ENCODE measurements at regions of chr1 and their contacts with region 1.

Region 1: GRCh38 chr1:111222308-111223125 is 5.0 kb upstream of the CHI3L2 start:
- DNase-seq: peak; percentile 83
- H3K4me3 Mint-ChIP-seq: no peak overlapping the region
- H3K27ac Mint-ChIP-seq: no peak overlapping the region
- H3K4me1 Mint-ChIP-seq: peaks cover 28% of the 10 kb centered on the region
- H3K27me3 Mint-ChIP-seq: no peaks in the 10 kb centered on the region
- CTCF ChIP-seq: peak; percentile 88

Region 2: DNA sequence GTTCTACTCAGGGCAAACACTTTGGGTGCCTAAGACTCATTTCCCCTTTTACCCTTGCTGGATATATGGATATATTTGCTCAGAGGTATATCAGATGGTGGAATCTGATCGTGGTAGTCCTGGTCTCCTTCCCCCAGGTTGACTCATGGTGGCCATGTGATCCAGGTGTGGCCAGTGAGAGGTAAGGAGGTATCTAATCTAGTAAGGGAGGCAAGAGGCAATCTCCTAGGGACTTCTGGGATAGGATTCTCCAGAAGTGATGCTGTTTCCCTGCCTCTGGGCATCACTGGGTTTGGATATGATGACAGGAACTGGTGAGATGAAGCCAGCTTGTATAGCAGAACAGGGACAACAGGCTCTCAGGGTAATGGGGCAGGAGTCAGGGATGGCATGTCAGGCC is 13.6 kb before region 1 on chr1:
- CTCF ChIA-PET with region 1: no interaction called
- intact Hi-C with region 1: no loop called
- DNase-seq: no peak
- H3K4me3 Mint-ChIP-seq: no peak overlapping the region
- H3K27ac Mint-ChIP-seq: no peak overlapping the region
- H3K4me1 Mint-ChIP-seq: peaks cover 17% of the 10 kb centered on the region
- H3K27me3 Mint-ChIP-seq: no peaks in the 10 kb centered on the region
- CTCF ChIP-seq: no peak

Region 3: GRCh38 chr1:111334169-111334568 is 111.7 kb after region 1 on chr1:
- CTCF ChIA-PET with region 1: interaction called, 6 read pairs
- intact Hi-C with region 1: loop called (anchors 1 kb)
- DNase-seq: peak; percentile 26
- H3K4me3 Mint-ChIP-seq: no peak overlapping the region
- H3K27ac Mint-ChIP-seq: no peak overlapping the region
- H3K4me1 Mint-ChIP-seq: no peaks in the 10 kb centered on the region
- H3K27me3 Mint-ChIP-seq: peaks cover 12% of the 10 kb centered on the region
- CTCF ChIP-seq: peak; percentile 30

Region 4: GRCh38 chr1:111346089-111346885 is 123.8 kb after region 1 on chr1:
- CTCF ChIA-PET with region 1: interaction called, 3 read pairs
- intact Hi-C with region 1: loop called (anchors 5 kb)
- DNase-seq: peak; percentile 72
- H3K4me3 Mint-ChIP-seq: peak overlapping the region; percentile 79
- H3K27ac Mint-ChIP-seq: peak overlapping the region; percentile 73
- H3K4me1 Mint-ChIP-seq: no peaks in the 10 kb centered on the region
- H3K27me3 Mint-ChIP-seq: peaks cover 13% of the 10 kb centered on the region
- CTCF ChIP-seq: no peak

Region 5: DNA sequence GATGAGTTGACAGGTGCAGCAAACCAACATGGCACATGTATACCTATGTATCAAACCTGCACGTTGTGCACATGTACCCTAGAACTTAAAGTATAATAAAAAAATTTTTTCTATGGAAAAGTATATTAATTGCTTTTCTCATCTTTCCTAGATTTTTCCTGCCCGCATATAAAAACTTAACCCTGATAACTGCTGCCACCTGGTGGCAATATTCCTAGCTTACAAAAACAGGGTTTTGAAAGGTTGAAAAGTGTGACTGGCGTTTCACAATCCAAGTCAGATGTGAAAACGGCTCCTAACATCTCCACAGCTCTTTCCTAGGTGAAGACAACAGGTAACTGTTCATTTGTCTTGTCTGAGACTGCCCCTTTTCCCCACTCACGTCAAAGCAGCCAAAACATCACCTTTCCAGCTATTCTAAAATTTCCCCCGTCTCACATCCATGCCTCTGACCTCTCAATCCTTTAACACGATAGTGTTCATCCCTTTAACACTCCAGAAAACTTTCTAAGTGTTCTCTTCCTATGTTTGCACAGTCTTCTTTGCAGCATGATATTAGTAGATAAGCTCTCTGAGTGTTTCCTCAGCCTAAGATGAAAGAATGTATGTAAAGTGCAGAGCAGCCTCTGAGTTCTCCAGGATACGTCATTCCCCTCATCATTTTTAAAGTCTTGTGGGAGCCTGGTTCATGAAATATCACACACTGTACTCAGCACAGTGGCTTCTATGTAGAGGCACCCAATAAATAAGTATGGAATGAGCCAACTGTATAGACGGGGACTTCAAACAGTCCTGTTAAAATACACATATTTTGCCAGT is 177.5 kb after region 1 on chr1:
- CTCF ChIA-PET with region 1: interaction called, 13 read pairs
- intact Hi-C with region 1: loop called (anchors 1 kb)
- DNase-seq: peak; percentile 49
- H3K4me3 Mint-ChIP-seq: peak overlapping the region; percentile 5
- H3K27ac Mint-ChIP-seq: no peak overlapping the region
- H3K4me1 Mint-ChIP-seq: no peaks in the 10 kb centered on the region
- H3K27me3 Mint-ChIP-seq: peaks cover 74% of the 10 kb centered on the region
- CTCF ChIP-seq: peak; percentile 25